ENCODE measurements at regions of chr2 and their contacts with region 1.

Region 1: DNA sequence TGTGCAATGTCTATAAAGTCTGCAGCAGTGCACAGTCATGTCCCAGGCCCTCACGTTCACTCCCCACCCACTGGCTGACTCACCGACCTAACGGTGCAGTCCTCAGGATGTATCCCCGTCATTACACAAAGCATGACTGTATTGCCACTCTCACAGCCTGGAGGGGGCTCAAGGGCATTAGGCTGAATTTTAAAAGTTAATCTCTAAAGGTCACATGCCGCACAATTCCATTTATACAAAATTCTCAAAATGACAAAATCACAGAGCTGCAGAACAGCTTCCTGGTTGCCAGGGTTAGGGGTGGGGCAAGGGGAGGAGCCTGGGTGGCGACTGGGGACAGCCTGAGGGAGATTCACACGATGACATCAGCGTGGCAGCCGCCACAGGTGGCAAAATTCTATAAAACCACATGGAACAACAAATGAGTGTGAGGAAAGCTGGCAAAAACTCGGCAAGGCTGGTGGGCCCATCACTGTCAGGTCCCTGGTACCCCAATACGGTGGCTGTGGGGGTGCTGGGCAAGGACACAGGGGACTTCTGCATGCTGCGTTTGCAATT is 97.6 kb downstream of the NDUFA10 start:
- DNase-seq: peak; percentile 90
- H3K4me3 Mint-ChIP-seq: peak overlapping the region; percentile 36
- H3K27ac Mint-ChIP-seq: peak overlapping the region; percentile 83
- H3K4me1 Mint-ChIP-seq: peaks cover 24% of the 10 kb centered on the region
- H3K27me3 Mint-ChIP-seq: peaks cover 8% of the 10 kb centered on the region

Region 2: GRCh38 chr2:239321596-239322415 is 605.7 kb before region 1 on chr2:
- CTCF ChIA-PET with region 1: no interaction called
- POLR2A ChIA-PET with region 1: no interaction called
- intact Hi-C with region 1: loop called (anchors 1 kb)
- DNase-seq: peak; percentile 86
- H3K4me3 Mint-ChIP-seq: peak overlapping the region; percentile 50
- H3K27ac Mint-ChIP-seq: peak overlapping the region; percentile 89
- H3K4me1 Mint-ChIP-seq: peaks cover 76% of the 10 kb centered on the region
- H3K27me3 Mint-ChIP-seq: no peaks in the 10 kb centered on the region

Region 3: GRCh38 chr2:239831001-239831731 is 96.3 kb before region 1 on chr2:
- CTCF ChIA-PET with region 1: no interaction called
- POLR2A ChIA-PET with region 1: no interaction called
- intact Hi-C with region 1: no loop called
- DNase-seq: no peak
- H3K4me3 Mint-ChIP-seq: no peak overlapping the region
- H3K27ac Mint-ChIP-seq: no peak overlapping the region
- H3K4me1 Mint-ChIP-seq: no peaks in the 10 kb centered on the region
- H3K27me3 Mint-ChIP-seq: no peaks in the 10 kb centered on the region

Region 4: GRCh38 chr2:240074545-240074944 is 147.0 kb after region 1 on chr2:
- CTCF ChIA-PET with region 1: no interaction called
- POLR2A ChIA-PET with region 1: no interaction called
- intact Hi-C with region 1: no loop called
- DNase-seq: no peak
- H3K4me3 Mint-ChIP-seq: no peak overlapping the region
- H3K27ac Mint-ChIP-seq: no peak overlapping the region
- H3K4me1 Mint-ChIP-seq: no peaks in the 10 kb centered on the region
- H3K27me3 Mint-ChIP-seq: peaks cover 9% of the 10 kb centered on the region

Measured in activated CD4-positive, alpha-beta memory T cell treated with anti-CD3 and anti-CD28 coated beads for 36 hours (primary cell).